Vagina (tissue), 2 donors: ENCODE measurements at regions of chr19 and their contacts with region 1.

Region 1: GRCh38 chr19:52139252-52140031 is at the start of gene ZNF616:
- DNase-seq: peak in 1 of 2 donors; percentile 94
- H3K4me3 ChIP-seq: peak within 1 kb of the TSS; percentile 77 to 78
- H3K27ac ChIP-seq: peak within 1 kb of the TSS; percentile 95
- H3K4me1 ChIP-seq: peaks cover 21% of the 10 kb centered on the region
- H3K27me3 ChIP-seq: no peaks in the 10 kb centered on the region
- CTCF ChIP-seq: peak; percentile 58 to 80 (median 77)
- POLR2A ChIP-seq: peak in 1 of 2 donors; percentile 85
- total RNA-seq, gene ZNF616: 2.7 TPM

Region 2: DNA sequence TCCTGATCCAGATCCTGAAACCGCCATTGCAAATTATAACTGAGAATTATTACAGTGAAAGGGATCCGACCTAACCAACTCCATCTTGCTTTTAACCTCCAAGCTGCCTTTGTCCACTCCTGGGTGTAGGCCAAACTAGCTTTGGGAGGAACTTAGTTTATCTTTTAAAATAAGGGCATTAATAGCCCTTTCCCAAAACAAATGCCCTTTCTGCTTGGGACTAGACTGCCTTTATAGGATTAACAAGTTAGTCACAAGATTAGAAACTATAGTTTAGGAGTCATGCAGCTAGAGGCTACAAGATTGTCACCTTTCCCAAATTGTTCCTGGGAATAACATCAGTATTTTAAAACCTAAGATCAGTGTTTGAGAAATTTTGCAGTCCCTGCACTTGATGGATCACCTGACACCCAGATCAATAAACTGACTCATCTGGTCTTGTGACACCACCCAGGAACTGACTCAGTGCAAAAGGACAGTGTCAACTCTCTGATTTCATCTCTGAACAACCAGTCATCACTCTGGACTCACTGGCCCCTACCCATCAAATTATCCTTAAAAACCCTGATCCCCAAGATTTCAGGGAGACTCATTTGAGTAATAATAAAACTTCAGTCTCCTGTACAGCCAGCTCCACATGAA is 39.8 kb before region 1 on chr19:
- intact Hi-C with region 1: no loop called
- DNase-seq: no peak
- H3K4me3 ChIP-seq: no peak overlapping the region
- H3K27ac ChIP-seq: no peak overlapping the region
- H3K4me1 ChIP-seq: peaks cover 5% of the 10 kb centered on the region
- H3K27me3 ChIP-seq: no peaks in the 10 kb centered on the region
- CTCF ChIP-seq: no peak
- POLR2A ChIP-seq: no peak

Region 3: GRCh38 chr19:52189735-52190486 is 50.5 kb after region 1 on chr19 and contains the start of gene PPP2R1A:
- intact Hi-C with region 1: loop called (anchors 5 kb)
- DNase-seq: peak in 1 of 2 donors; percentile 100
- H3K4me3 ChIP-seq: peak within 1 kb of the TSS; percentile 72 to 87
- H3K27ac ChIP-seq: peak within 1 kb of the TSS; percentile 92
- H3K4me1 ChIP-seq: peaks cover 59% of the 10 kb centered on the region
- H3K27me3 ChIP-seq: no peaks in the 10 kb centered on the region
- CTCF ChIP-seq: no peak
- POLR2A ChIP-seq: peak in 1 of 2 donors; percentile 78
- total RNA-seq, gene PPP2R1A: 163 TPM

Region 4: GRCh38 chr19:52244021-52244420 is 104.6 kb after region 1 on chr19:
- intact Hi-C with region 1: loop called (anchors 5 kb)
- DNase-seq: no peak
- H3K4me3 ChIP-seq: no peak overlapping the region
- H3K27ac ChIP-seq: no peak overlapping the region
- H3K4me1 ChIP-seq: no peaks in the 10 kb centered on the region
- H3K27me3 ChIP-seq: no peaks in the 10 kb centered on the region
- CTCF ChIP-seq: no peak
- POLR2A ChIP-seq: no peak